Ovary (tissue), 10 donors: ENCODE measurements at regions of chr4 and their contacts with region 1.

Region 1: GRCh38 chr4:112938461-112939058 is 110.9 kb upstream of the ANK2 start:
- DNase-seq: no peak
- H3K4me3 ChIP-seq: no peak overlapping the region
- H3K27ac ChIP-seq: no peak overlapping the region
- H3K4me1 ChIP-seq: no peaks in the 10 kb centered on the region
- H3K27me3 ChIP-seq: no peaks in the 10 kb centered on the region
- CTCF ChIP-seq: peak; percentile 44 to 72 (median 57)
- EP300 ChIP-seq: no peak
- POLR2A ChIP-seq: no peak

Region 2: DNA sequence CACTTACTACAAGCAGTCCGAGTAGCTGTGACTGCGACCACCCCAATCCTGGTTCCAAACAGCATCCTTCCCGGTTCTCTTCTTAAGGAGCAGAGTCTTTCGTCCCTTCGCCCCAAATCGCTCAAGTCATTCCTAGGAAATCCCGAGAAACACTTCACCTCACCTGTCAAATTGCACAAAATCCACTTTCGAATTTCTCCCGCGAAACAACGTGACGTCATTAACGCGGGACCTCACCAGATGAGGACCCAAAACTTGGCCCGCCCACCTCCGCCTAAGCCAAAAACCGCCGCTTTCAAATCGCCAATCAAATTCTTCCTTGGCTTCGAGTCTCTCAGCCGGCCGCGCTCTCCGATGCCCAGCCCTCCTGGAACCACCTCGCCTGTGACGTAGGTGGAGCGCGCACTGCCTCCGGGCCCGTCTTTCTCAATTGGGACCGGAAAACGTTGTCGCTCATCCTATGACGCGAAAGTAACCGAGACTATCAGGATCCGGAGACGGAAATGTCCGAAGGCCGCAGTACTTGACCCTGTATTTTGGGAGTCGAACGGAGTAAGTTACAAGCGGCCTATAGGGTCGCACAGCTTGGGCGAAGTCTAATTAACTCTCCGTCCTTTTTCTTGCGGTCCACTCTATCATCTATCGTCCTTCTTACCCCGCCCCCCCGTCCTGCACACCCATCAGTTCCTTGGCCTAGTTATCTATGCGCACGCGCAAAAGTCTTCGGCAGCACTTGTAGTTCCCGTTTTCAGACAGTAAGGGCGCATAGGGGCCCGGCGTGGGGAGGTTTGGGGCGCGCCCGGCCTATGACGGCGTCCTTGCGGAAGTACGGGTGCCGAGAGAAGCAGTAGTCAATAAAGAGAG is 301.6 kb before region 1 on chr4 and contains the starts of genes LARP7 and ZGRF1:
- intact Hi-C with region 1: loop called in 2 of 4 experiments (anchors 5 to 10 kb)
- DNase-seq: peak; percentile 99
- H3K4me3 ChIP-seq: peak within 1 kb of the TSS; percentile 59
- H3K27ac ChIP-seq: peak within 1 kb of the TSS; percentile 80 to 93
- H3K4me1 ChIP-seq: peaks cover 2% of the 10 kb centered on the region
- H3K27me3 ChIP-seq: no peaks in the 10 kb centered on the region
- CTCF ChIP-seq: peak; percentile 85 to 99 (median 98)
- EP300 ChIP-seq: no peak
- POLR2A ChIP-seq: peak; percentile 34
- total RNA-seq, gene LARP7: 25.0 to 47.1 (median 36.3) TPM
- total RNA-seq, gene ZGRF1: 4.2 to 6.1 (median 4.5) TPM

Region 3: GRCh38 chr4:112751447-112751846 is 187.1 kb before region 1 on chr4:
- intact Hi-C with region 1: no loop called
- DNase-seq: no peak
- H3K4me3 ChIP-seq: no peak overlapping the region
- H3K27ac ChIP-seq: no peak overlapping the region
- H3K4me1 ChIP-seq: no peaks in the 10 kb centered on the region
- H3K27me3 ChIP-seq: no peaks in the 10 kb centered on the region
- CTCF ChIP-seq: no peak
- EP300 ChIP-seq: no peak
- POLR2A ChIP-seq: no peak

Region 4: DNA sequence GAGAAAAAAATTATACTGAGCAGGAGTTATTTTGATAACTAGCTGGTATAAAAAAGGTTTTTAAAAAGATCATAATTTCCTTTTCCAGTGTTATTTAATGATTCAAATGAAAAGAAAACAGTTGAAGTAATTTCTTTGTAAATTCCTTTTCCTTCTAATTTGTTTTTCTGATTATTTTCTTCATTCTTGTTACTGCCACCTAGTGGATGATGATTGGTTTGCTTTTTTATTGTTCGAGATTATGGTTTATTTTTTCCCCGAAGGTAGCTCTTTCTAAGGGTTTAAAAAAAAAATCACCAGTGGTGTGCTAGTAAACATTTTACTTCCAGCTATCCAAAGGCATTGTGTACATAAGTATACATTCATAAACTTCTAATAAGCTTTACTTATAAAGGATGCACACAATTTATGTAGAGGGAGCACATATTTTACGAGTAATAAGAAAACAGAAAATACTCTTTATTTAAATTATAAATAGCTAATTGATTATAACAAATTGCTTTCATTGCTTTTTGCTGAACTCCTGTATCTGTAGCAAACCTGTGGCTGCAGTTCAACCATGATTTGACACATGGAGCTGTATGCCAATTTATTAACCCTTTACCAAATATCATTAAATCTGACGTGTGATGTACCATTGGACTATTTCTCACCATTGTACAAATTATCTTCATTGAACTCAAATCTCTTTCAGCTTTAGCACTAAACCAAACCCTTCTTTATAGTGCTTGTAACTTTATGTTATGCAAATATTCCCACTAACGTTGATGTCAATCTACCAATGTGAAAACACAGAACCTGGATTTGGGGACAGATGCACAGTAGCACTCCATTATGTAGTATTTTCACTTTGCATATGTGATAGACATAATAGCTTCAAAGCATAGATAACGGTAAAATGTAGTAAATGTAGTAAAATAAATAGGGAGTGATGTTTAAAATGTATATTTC is 13.1 kb after region 1 on chr4:
- intact Hi-C with region 1: no loop called
- DNase-seq: no peak
- H3K4me3 ChIP-seq: no peak overlapping the region
- H3K27ac ChIP-seq: no peak overlapping the region
- H3K4me1 ChIP-seq: no peaks in the 10 kb centered on the region
- H3K27me3 ChIP-seq: no peaks in the 10 kb centered on the region
- CTCF ChIP-seq: peak in 1 of 3 donors; percentile 33
- EP300 ChIP-seq: no peak
- POLR2A ChIP-seq: no peak